Naive thymus-derived CD4-positive, alpha-beta T cell (primary cell): ENCODE measurements at regions of chr2 and their contacts with region 1.

Region 1: GRCh38 chr2:195594248-195594647 is 62.8 kb upstream of the SLC39A10 start:
- DNase-seq: no peak
- ATAC-seq: no peak
- H3K4me3 ChIP-seq: no peak overlapping the region
- H3K4me3 Mint-ChIP-seq: peak overlapping the region in 2 of 10 donors; percentile 12 to 19
- H3K27ac ChIP-seq: no peak overlapping the region
- H3K27ac Mint-ChIP-seq: peak overlapping the region in 3 of 9 donors; percentile 4 to 16 (median 7)
- H3K4me1 ChIP-seq: peaks cover 0 to 7% of the 10 kb centered on the region in 2 donors
- H3K4me1 Mint-ChIP-seq: peaks cover 10 to 40% (median 26%) of the 10 kb centered on the region in 7 donors
- H3K27me3 ChIP-seq: no peaks in the 10 kb centered on the region
- H3K27me3 Mint-ChIP-seq: no peaks in the 10 kb centered on the region

Region 2: DNA sequence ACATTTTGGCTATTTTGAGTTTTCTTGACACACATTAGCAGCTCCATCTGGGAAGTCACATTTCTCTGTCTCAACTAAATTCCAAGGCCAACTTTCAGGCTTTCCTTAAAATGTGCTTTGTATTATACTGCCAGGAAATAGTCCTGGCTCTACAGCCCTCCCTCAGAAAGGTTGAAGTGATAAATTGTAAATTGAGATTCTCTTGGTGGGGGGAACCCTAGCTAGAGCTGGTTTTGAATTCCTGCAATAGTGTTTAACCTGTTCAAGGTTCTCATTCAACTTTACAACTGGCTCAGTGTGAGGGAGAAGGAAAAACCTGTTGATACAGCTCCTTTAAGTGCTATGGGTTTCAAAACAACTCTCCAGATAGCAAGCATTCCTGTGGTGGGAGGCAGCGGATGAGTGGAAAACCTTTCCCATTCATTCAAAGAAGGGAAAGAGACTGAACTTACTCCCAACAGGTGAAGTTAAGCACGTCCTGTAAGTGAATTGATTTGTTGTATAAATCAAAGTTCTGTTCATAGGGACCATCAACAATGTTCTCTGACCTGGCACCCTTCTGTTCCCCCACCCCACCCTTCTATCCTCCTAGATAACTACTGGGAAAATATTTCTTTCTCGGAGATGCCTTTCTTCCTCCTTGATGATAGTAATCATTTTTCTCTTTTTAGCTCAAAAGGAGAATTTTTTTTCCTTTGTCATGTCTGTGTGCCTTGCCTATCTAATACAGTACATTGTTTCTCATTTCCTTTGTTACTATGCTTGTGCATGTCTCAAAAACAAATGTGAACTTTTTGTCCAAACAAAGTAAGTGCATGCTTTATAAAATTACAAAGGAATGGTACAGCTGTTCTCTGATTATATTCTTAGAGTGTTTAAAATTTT is 18.6 kb after region 1 on chr2:
- CTCF ChIA-PET with region 1: interaction called, 5 read pairs
- POLR2A ChIA-PET with region 1: interaction called, 3 read pairs
- intact Hi-C with region 1: loop called in 1 of 2 experiments (anchors 2 kb)
- DNase-seq: no peak
- ATAC-seq: no peak
- H3K4me3 ChIP-seq: no peak overlapping the region
- H3K4me3 Mint-ChIP-seq: peak overlapping the region in 1 of 10 donors; percentile 17
- H3K27ac ChIP-seq: no peak overlapping the region
- H3K27ac Mint-ChIP-seq: peak overlapping the region in 5 of 9 donors; percentile 4 to 77 (median 43)
- H3K4me1 ChIP-seq: no peaks in the 10 kb centered on the region
- H3K4me1 Mint-ChIP-seq: peaks cover 0 to 30% (median 16%) of the 10 kb centered on the region in 7 donors
- H3K27me3 ChIP-seq: no peaks in the 10 kb centered on the region
- H3K27me3 Mint-ChIP-seq: no peaks in the 10 kb centered on the region

Region 3: GRCh38 chr2:195626507-195626906 is 32.3 kb after region 1 on chr2:
- CTCF ChIA-PET with region 1: no interaction called
- POLR2A ChIA-PET with region 1: interaction called, 3 read pairs
- intact Hi-C with region 1: loop called in 1 of 2 experiments (anchors 5 kb)
- DNase-seq: no peak
- ATAC-seq: no peak
- H3K4me3 ChIP-seq: no peak overlapping the region
- H3K4me3 Mint-ChIP-seq: no peak overlapping the region
- H3K27ac ChIP-seq: no peak overlapping the region
- H3K27ac Mint-ChIP-seq: peak overlapping the region in 1 of 9 donors; percentile 19
- H3K4me1 ChIP-seq: no peaks in the 10 kb centered on the region
- H3K4me1 Mint-ChIP-seq: peaks cover 4 to 14% (median 6%) of the 10 kb centered on the region in 7 donors
- H3K27me3 ChIP-seq: no peaks in the 10 kb centered on the region
- H3K27me3 Mint-ChIP-seq: no peaks in the 10 kb centered on the region

Region 4: DNA sequence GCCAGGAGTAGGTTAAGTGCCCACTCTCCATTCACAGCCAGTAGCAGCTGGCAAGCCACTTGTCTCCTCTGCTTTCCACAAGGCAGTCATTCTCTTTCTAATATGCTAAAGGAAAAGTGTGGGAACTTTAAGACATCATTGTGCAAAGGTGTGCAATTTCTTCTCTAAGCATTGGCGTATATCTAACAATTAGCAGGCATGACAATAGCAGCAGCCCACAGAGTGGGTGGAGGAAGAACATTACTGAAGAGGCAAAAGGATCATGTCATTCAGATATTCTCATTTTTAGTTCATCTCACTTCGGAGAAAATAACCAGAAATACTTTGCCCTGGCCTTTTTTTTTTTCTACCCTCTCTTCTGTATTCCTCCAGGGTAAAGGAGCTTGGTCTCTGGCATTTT is 296.8 kb after region 1 on chr2:
- CTCF ChIA-PET with region 1: no interaction called
- POLR2A ChIA-PET with region 1: no interaction called
- intact Hi-C with region 1: no loop called
- DNase-seq: no peak
- ATAC-seq: no peak
- H3K4me3 ChIP-seq: no peak overlapping the region
- H3K4me3 Mint-ChIP-seq: no peak overlapping the region
- H3K27ac ChIP-seq: no peak overlapping the region
- H3K27ac Mint-ChIP-seq: no peak overlapping the region
- H3K4me1 ChIP-seq: no peaks in the 10 kb centered on the region
- H3K4me1 Mint-ChIP-seq: no peaks in the 10 kb centered on the region
- H3K27me3 ChIP-seq: no peaks in the 10 kb centered on the region
- H3K27me3 Mint-ChIP-seq: peaks cover 0 to 12% (median 0%) of the 10 kb centered on the region in 5 donors